Mammary epithelial cell (primary cell): ENCODE measurements at regions of chr20 and their contacts with region 1.

Region 1: DNA sequence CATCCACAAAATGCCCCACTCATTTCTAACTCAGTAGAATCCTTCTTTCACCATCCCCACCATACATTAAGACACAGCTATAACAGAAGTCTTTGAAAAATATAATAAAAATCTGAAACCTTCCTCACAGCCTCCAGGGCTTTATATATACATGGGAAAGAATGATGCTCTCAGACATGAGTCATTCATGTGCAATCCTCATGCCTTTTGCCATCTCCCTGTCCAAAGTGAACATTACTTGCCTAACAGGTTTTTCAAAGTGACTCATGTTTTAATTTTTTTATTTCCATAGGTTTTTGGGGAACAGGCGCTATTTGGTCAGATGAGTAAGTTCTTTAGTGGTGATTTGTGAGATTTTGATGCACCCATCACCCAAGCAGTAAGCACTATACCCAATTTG is 162.7 kb downstream of the RALGAPA2 start:
- DNase-seq: peak; percentile 93
- H3K4me3 ChIP-seq: peak overlapping the region in 2 of 3 experiments; percentile 22 to 40
- H3K27ac ChIP-seq: peak overlapping the region; percentile 98
- H3K4me1 ChIP-seq: peaks cover 47% of the 10 kb centered on the region
- H3K27me3 ChIP-seq: no peaks in the 10 kb centered on the region
- CTCF ChIP-seq: no peak

Region 2: DNA sequence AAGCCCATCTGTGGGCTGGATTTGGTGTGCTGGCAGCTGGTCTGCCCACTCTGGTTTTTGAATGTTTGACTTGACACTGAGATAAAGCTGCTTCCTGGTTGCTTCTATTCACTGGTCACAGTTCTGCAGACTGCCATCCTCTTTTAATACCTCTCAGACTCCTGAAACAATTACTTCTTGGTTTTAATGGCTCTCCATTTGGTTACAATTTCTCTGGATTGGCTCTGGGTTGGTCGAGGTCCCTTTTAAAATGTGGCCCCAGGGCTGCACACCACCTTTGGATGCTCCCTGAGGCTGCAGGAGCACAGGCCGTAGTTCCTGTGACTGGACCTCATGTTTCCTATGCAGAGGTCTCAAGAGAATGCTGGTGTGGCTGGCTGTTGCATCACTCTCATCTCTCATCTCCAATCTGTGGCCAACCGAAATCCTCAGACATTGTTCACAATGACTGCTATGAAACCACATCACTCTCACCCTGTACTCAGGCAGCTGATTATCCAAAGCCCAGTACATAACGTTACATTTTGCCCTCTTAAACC is 83.3 kb before region 1 on chr20:
- CTCF ChIA-PET with region 1: no interaction called
- dilution Hi-C with region 1: no loop called
- in situ Hi-C with region 1: no loop called
- intact Hi-C with region 1: loop called (anchors 5 kb)
- DNase-seq: peak; percentile 28
- H3K4me3 ChIP-seq: no peak overlapping the region
- H3K27ac ChIP-seq: no peak overlapping the region
- H3K4me1 ChIP-seq: no peaks in the 10 kb centered on the region
- H3K27me3 ChIP-seq: no peaks in the 10 kb centered on the region
- CTCF ChIP-seq: no peak

Region 3: DNA sequence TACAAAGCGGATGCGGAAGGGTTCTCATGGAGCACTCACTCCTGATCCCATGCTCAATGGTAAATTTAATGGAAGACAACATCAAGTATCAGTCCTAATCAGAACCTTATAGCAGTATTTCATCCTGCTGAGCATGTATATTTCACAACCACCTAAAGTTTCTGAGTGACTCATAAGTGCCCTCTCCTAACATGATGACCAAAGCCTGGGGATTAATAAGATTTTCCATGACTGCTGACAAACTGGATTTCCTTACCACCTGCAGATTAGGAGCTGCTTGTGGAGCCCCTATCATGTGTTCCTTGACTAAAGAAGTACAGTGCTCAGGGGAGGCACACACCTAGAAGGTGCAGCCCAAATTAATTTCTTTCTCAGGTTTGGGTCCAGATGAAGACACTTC is 69.0 kb before region 1 on chr20:
- CTCF ChIA-PET with region 1: no interaction called
- dilution Hi-C with region 1: no loop called
- in situ Hi-C with region 1: no loop called
- intact Hi-C with region 1: loop called (anchors 1 kb)
- DNase-seq: peak; percentile 79
- H3K4me3 ChIP-seq: no peak overlapping the region
- H3K27ac ChIP-seq: peak overlapping the region; percentile 45
- H3K4me1 ChIP-seq: peaks cover 10% of the 10 kb centered on the region
- H3K27me3 ChIP-seq: no peaks in the 10 kb centered on the region
- CTCF ChIP-seq: no peak

Region 4: GRCh38 chr20:20520776-20521175 is 28.9 kb before region 1 on chr20:
- CTCF ChIA-PET with region 1: no interaction called
- dilution Hi-C with region 1: no loop called
- in situ Hi-C with region 1: no loop called
- intact Hi-C with region 1: loop called (anchors 1 kb)
- DNase-seq: peak; percentile 90
- H3K4me3 ChIP-seq: no peak overlapping the region
- H3K27ac ChIP-seq: peak overlapping the region; percentile 75
- H3K4me1 ChIP-seq: peaks cover 21% of the 10 kb centered on the region
- H3K27me3 ChIP-seq: no peaks in the 10 kb centered on the region
- CTCF ChIP-seq: no peak